Endothelial cell of umbilical vein (primary cell): ENCODE measurements at regions of chr5 and their contacts with region 1.

Region 1: GRCh38 chr5:84274585-84275468 is 109.9 kb downstream of the EDIL3 start:
- DNase-seq: peak; percentile 61
- H3K4me3 ChIP-seq: no peak overlapping the region
- H3K27ac ChIP-seq: no peak overlapping the region
- H3K4me1 ChIP-seq: no peaks in the 10 kb centered on the region
- H3K27me3 ChIP-seq: no peaks in the 10 kb centered on the region
- CTCF ChIP-seq: peak; percentile 39 to 45
- POLR2A ChIP-seq: no peak

Region 2: GRCh38 chr5:84450617-84451414 is 176.0 kb after region 1 on chr5:
- CTCF ChIA-PET with region 1: interaction called, 5 read pairs
- POLR2A ChIA-PET with region 1: no interaction called
- dilution Hi-C with region 1: no loop called
- intact Hi-C with region 1: loop called (anchors 2 kb)
- DNase-seq: peak; percentile 43
- H3K4me3 ChIP-seq: no peak overlapping the region
- H3K27ac ChIP-seq: no peak overlapping the region
- H3K4me1 ChIP-seq: peaks cover 8% of the 10 kb centered on the region
- H3K27me3 ChIP-seq: no peaks in the 10 kb centered on the region
- CTCF ChIP-seq: no peak
- POLR2A ChIP-seq: no peak

Region 3: GRCh38 chr5:85049020-85049419 is 774.2 kb after region 1 on chr5:
- CTCF ChIA-PET with region 1: no interaction called
- POLR2A ChIA-PET with region 1: no interaction called
- dilution Hi-C with region 1: no loop called
- intact Hi-C with region 1: loop called (anchors 10 kb)
- DNase-seq: peak; percentile 18
- H3K4me3 ChIP-seq: no peak overlapping the region
- H3K27ac ChIP-seq: no peak overlapping the region
- H3K4me1 ChIP-seq: no peaks in the 10 kb centered on the region
- H3K27me3 ChIP-seq: no peaks in the 10 kb centered on the region
- CTCF ChIP-seq: peak; percentile 5 to 20
- POLR2A ChIP-seq: no peak